WTC11 (cell line): ENCODE measurements at regions of chr1 and their contacts with region 1.

Region 1: GRCh38 chr1:90729504-90730242 is 12.6 kb upstream of the BARHL2 start:
- DNase-seq: peak; percentile 88
- ATAC-seq: peak; percentile 64
- H3K4me3 Mint-ChIP-seq: peak overlapping the region; percentile 82
- H3K27ac Mint-ChIP-seq: no peak overlapping the region
- H3K4me1 Mint-ChIP-seq: peaks cover 51% of the 10 kb centered on the region
- H3K27me3 Mint-ChIP-seq: peaks cover 100% of the 10 kb centered on the region
- CTCF ChIP-seq: peak; percentile 91

Region 2: DNA sequence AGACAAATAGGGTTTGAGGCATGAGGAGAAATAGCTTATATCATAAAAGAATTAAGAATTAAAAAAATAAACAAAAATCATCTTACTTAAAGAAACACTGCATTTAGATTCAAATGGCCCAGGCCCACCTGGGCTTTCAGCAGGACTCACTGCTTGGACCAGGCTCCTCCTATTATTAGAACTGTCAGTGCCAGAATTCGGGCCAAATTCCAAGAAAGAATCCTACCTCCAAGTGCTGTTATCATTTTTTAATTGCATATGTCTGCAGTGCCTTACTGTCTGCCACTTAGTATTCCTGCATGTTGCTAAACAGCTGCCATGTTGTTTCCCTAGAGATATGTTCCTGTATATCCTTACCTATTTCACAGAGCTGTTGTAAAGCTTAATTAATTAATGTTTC is 124.6 kb before region 1 on chr1:
- CTCF ChIA-PET with region 1: no interaction called
- POLR2A ChIA-PET with region 1: no interaction called
- DNase-seq: no peak
- ATAC-seq: no peak
- H3K4me3 Mint-ChIP-seq: no peak overlapping the region
- H3K27ac Mint-ChIP-seq: no peak overlapping the region
- H3K4me1 Mint-ChIP-seq: 0 out of 2 replicates have a peak, but pooled peaks cover 4% of the 10 kb centered on the region
- H3K27me3 Mint-ChIP-seq: no peaks in the 10 kb centered on the region
- CTCF ChIP-seq: no peak

Region 3: GRCh38 chr1:90707363-90707710 is 22.3 kb before region 1 on chr1:
- CTCF ChIA-PET with region 1: interaction called, 34 read pairs
- POLR2A ChIA-PET with region 1: no interaction called
- DNase-seq: peak; percentile 87
- ATAC-seq: peak; percentile 73
- H3K4me3 Mint-ChIP-seq: peak overlapping the region; percentile 71
- H3K27ac Mint-ChIP-seq: no peak overlapping the region
- H3K4me1 Mint-ChIP-seq: peaks cover 68% of the 10 kb centered on the region
- H3K27me3 Mint-ChIP-seq: peaks cover 96% of the 10 kb centered on the region
- CTCF ChIP-seq: no peak

Region 4: DNA sequence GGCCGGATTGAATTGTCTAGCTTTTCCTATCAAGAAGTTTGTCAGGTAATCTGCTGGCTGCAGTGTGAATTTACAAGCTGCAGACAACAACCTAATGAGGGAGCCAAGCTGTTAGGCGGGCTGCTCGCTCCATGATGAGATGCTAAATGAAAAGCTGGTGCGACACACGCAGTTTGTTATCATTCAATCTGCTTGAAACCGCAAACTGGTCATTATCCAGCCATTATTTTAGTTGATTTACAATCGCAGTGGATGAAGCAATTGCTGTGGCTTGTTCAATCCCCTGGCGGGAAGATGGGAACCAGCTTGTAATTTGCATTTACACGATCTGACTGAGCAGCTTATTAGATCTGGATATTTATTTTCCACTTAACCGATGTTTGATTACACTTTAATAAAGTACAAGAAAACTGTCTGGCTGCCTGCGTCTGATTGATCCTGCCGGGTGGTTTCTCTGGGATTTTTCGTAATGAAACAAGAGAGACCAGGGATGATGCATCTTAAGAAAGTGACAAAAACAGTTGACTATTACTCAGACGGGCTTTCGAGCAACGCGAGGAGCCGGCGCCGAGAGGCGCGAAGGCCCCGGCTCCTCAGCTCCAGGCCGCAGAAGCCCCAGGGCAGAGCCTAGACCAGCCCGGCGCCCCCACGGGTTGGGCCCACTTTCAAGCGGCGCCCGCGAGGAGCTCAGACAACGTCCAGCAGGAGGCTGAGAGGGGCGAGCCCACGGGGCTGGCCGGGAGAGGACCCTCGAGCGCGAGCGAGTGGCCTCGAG is 105.4 kb after region 1 on chr1:
- CTCF ChIA-PET with region 1: interaction called, 15 read pairs
- POLR2A ChIA-PET with region 1: no interaction called
- DNase-seq: no peak
- ATAC-seq: peak; percentile 16
- H3K4me3 Mint-ChIP-seq: peak overlapping the region; percentile 61
- H3K27ac Mint-ChIP-seq: no peak overlapping the region
- H3K4me1 Mint-ChIP-seq: peaks cover 65% of the 10 kb centered on the region
- H3K27me3 Mint-ChIP-seq: peaks cover 89% of the 10 kb centered on the region
- CTCF ChIP-seq: no peak

Region 5: DNA sequence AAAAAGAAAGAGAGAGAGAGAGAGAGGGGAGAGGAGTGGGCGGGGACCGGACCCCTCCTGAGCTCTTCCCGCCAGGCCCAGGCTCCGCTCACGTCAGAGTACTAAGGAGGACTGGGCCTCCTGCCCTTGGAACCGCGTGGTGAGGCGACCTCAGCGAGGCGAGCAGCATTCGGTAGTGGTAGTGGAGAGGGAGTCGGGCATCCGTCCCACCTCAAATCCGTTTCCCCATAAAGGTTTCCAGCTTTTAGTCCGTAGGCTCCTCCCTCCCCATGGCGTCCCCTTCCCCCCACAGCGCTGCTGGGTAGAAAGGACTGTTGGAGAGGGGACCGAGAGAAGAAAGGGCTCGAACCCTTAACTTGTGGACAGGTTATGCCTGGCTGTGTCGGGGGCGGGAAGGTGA is 111.8 kb after region 1 on chr1:
- CTCF ChIA-PET with region 1: interaction called, 15 read pairs
- POLR2A ChIA-PET with region 1: no interaction called
- DNase-seq: peak; percentile 51
- ATAC-seq: peak; percentile 56
- H3K4me3 Mint-ChIP-seq: peak overlapping the region; percentile 62
- H3K27ac Mint-ChIP-seq: no peak overlapping the region
- H3K4me1 Mint-ChIP-seq: peaks cover 60% of the 10 kb centered on the region
- H3K27me3 Mint-ChIP-seq: peaks cover 86% of the 10 kb centered on the region
- CTCF ChIP-seq: no peak

Region 6: DNA sequence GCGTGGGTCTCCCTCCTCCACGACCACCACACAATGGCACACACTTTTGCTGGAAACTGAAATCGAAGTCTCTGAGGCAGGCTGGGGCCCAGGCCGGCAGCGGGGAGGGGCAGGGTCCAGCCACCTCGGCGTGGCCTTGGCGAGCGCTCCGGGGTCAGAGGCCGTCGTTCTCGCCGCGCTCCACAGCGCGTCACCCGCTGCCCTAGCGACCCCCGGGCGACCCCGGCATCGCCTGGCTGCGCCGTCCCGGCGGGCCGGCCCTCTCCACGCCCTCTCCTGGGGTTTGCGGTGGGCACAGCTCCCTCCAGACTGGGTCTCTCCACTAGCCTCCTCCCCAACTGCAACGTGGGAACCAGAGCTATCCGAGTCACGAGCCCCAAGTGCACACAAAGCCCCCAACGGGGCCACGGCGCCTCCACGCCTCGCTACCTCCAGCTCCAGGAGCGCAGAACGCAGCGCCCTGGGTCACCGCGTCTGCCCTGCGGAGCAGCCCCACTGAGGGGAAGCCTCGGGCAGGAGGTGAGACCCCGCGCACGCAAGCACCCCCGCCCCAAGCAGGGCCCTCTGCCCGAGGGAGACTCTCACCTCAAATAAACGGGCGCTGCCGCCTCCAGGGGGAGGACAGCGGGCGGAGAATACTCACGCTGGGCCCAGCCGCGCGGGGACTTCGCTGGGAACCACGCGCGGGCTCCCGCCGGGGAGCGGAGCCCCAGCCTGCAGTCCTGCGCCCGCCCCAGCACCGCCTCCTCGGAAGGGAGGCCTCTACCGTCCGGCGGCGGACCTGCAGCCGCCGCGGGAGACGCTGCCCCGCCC is 121.4 kb after region 1 on chr1:
- CTCF ChIA-PET with region 1: interaction called, 40 read pairs
- POLR2A ChIA-PET with region 1: no interaction called
- DNase-seq: peak; percentile 80
- ATAC-seq: peak; percentile 92
- H3K4me3 Mint-ChIP-seq: peak overlapping the region; percentile 79
- H3K27ac Mint-ChIP-seq: no peak overlapping the region
- H3K4me1 Mint-ChIP-seq: peaks cover 19% of the 10 kb centered on the region
- H3K27me3 Mint-ChIP-seq: peaks cover 74% of the 10 kb centered on the region
- CTCF ChIP-seq: peak; percentile 72

Region 7: GRCh38 chr1:90964444-90965035 is 234.9 kb after region 1 on chr1:
- CTCF ChIA-PET with region 1: interaction called, 19 read pairs
- POLR2A ChIA-PET with region 1: no interaction called
- DNase-seq: no peak
- ATAC-seq: peak; percentile 53
- H3K4me3 Mint-ChIP-seq: no peak overlapping the region
- H3K27ac Mint-ChIP-seq: no peak overlapping the region
- H3K4me1 Mint-ChIP-seq: peaks cover 13% of the 10 kb centered on the region
- H3K27me3 Mint-ChIP-seq: no peaks in the 10 kb centered on the region
- CTCF ChIP-seq: no peak